Activated CD4-positive, alpha-beta T cell treated with anti-CD3 and anti-CD28 coated beads for 36 hours (primary cell): ENCODE measurements at regions of chr11 and their contacts with region 1.

Region 1: DNA sequence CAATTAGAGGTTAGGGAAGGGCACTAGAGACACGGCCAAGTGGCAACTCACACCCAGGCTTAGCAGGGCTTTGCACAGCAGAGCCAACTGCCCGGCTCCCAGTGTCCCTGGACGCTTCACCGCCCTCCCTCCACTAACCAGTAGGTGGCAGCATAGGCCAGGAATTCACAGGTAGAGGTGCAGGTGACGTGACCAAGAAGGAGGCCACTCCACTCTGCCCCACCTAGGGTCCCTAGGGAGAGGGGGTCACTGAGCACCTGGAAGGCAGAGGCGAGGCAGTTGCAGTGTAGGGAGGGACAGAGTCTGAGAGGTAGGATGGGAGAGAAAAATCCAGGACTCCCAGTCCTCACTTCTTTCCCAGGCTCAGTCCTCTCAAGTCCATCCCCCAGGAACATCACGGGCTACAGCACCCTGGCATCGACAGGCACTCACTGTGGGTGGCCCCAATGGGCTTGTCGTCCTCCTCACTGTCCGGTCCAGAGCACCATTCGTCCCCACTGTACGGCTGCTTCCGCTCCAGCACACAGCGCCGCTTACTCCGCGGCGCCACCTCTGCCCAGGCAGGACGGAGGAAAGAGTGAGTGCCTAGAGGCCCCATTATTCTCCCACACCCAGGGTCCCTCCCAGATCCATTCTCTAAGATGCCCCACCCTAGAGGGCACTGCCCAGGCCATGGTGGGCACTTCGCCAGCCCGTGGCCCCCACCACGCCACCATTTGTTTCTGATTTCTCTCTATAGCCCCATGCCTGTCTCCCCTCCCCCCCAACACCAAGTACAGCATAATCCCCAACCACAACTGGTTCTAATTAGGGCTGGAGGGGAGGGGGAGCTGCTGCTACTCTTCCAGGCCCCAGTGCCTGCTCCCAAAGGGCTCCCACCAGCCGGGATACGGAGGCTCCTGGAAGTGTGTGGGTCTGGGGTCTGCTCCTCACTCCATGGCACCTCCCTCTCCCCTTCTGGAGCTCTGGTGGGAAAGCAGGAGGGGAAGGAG is 18.4 kb downstream of the BCL9L start:
- DNase-seq: peak; percentile 92
- ATAC-seq: peak; percentile 66
- H3K4me3 Mint-ChIP-seq: no peak overlapping the region
- H3K27ac Mint-ChIP-seq: peak overlapping the region; percentile 67
- H3K4me1 Mint-ChIP-seq: peaks cover 48% of the 10 kb centered on the region
- H3K27me3 Mint-ChIP-seq: no peaks in the 10 kb centered on the region

Region 2: DNA sequence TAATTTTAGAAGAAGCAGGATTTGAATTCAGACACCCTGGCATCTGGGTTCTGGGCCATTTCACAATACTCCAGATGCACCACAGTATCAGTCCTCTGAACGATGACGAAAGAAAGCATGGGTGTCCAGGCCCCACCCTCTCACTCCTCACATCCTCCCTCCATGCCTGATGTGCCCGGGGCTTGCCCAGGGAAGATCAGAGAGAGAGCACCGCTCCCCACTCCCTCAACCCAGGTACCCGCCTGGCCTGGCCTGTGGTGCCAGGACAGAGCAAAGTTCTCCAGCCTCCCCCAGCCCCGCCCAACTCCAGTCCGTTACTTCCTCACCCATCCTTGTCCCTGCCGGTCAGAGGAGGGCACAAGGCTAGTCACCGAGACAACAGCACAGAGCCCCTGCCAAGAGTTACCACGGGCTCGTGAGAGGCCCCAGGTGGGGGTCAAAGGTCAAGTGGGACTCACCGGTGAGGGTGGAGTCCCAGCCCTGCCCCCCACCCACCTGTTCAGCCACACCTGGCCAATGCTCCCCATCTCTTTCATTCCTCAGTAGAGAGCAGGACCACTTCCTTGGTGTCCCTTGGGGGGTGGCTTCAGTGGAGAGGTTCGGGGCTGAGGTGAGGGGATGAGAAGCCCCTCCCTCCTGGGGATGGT is 10.3 kb after region 1 on chr11:
- CTCF ChIA-PET with region 1: no interaction called
- POLR2A ChIA-PET with region 1: interaction called, 18 read pairs
- intact Hi-C with region 1: no loop called
- DNase-seq: peak; percentile 81
- ATAC-seq: peak; percentile 48
- H3K4me3 Mint-ChIP-seq: peak overlapping the region; percentile 86
- H3K27ac Mint-ChIP-seq: peak overlapping the region; percentile 100
- H3K4me1 Mint-ChIP-seq: peaks cover 84% of the 10 kb centered on the region
- H3K27me3 Mint-ChIP-seq: no peaks in the 10 kb centered on the region

Region 3: GRCh38 chr11:118956094-118956846 is 48.9 kb after region 1 on chr11 and contains the start of gene UPK2:
- CTCF ChIA-PET with region 1: interaction called, 70 read pairs
- POLR2A ChIA-PET with region 1: no interaction called
- intact Hi-C with region 1: loop called (anchors 1 kb)
- DNase-seq: peak; percentile 95
- ATAC-seq: peak; percentile 100
- H3K4me3 Mint-ChIP-seq: no peak within 1 kb of the TSS
- H3K27ac Mint-ChIP-seq: peak within 1 kb of the TSS; percentile 0
- H3K4me1 Mint-ChIP-seq: peaks cover 5% of the 10 kb centered on the region
- H3K27me3 Mint-ChIP-seq: no peaks in the 10 kb centered on the region
- total RNA-seq, gene UPK2: 0.19 to 0.32 TPM

Region 4: GRCh38 chr11:119044708-119045107 is 137.4 kb after region 1 on chr11:
- CTCF ChIA-PET with region 1: no interaction called
- POLR2A ChIA-PET with region 1: no interaction called
- intact Hi-C with region 1: no loop called
- DNase-seq: no peak
- ATAC-seq: no peak
- H3K4me3 Mint-ChIP-seq: no peak overlapping the region
- H3K27ac Mint-ChIP-seq: no peak overlapping the region
- H3K4me1 Mint-ChIP-seq: peaks cover 12% of the 10 kb centered on the region
- H3K27me3 Mint-ChIP-seq: no peaks in the 10 kb centered on the region